PC-9 (cell line): ENCODE measurements at regions of chr6 and their contacts with region 1.

Region 1: GRCh38 chr6:144215932-144216667 is 65.8 kb downstream of the STX11 start:
- DNase-seq: peak; percentile 85 to 96
- H3K4me3 ChIP-seq: peak overlapping the region; percentile 85
- H3K27ac ChIP-seq: peak overlapping the region; percentile 70
- H3K4me1 ChIP-seq: peaks cover 15% of the 10 kb centered on the region; the same call in 1 of the 2 replicates
- H3K27me3 ChIP-seq: no peaks in the 10 kb centered on the region
- CTCF ChIP-seq: peak; percentile 83

Region 2: DNA sequence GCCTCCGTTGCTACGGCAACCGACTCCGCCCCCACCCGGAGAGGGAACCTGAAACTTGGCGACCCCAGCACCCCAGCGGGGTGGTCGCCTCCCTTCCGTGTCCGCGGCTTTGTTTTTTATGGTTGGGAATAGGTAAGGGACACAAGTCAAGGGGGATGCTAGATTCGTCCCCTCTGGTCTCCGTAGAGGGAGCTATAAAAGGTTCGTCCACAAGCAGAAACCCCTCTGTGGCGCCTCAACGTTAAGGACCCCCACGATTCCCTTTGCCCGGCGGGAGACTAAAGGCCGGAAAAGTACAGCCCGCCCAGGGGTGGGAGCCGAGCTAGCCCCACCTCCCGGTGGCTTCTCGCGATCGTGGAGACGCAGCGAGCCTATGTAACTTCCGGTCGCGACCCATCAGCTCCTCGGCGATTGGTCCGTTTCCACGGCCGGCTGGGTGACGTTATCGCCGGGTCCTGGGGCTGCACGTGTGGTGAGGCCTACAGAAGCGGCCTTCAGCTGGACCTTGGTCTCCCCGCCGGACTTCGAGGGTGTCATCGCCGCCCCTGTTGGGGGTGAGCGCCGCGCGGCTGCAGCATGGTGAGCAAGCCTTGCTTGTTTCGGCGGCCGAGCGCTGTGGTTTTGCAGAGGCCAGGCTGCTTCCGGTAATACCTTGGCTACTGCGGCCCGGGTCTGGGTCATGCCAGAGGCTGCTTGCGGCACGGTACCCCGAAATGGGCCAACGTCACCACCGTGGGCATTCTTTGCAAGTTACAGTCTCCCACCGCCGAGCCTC is 373.0 kb before region 1 on chr6 and contains the start of gene LTV1:
- CTCF ChIA-PET with region 1: no interaction called
- POLR2A ChIA-PET with region 1: no interaction called
- intact Hi-C with region 1: loop called (anchors 5 kb)
- DNase-seq: peak; percentile 87 to 92
- H3K4me3 ChIP-seq: peak within 1 kb of the TSS; percentile 94
- H3K27ac ChIP-seq: peak within 1 kb of the TSS; percentile 72
- H3K4me1 ChIP-seq: peaks cover 17% of the 10 kb centered on the region; the same call in 1 of the 2 replicates
- H3K27me3 ChIP-seq: no peaks in the 10 kb centered on the region
- CTCF ChIP-seq: no peak
- total RNA-seq, gene LTV1: 15.4 and 18.3 TPM in 2 replicates

Region 3: DNA sequence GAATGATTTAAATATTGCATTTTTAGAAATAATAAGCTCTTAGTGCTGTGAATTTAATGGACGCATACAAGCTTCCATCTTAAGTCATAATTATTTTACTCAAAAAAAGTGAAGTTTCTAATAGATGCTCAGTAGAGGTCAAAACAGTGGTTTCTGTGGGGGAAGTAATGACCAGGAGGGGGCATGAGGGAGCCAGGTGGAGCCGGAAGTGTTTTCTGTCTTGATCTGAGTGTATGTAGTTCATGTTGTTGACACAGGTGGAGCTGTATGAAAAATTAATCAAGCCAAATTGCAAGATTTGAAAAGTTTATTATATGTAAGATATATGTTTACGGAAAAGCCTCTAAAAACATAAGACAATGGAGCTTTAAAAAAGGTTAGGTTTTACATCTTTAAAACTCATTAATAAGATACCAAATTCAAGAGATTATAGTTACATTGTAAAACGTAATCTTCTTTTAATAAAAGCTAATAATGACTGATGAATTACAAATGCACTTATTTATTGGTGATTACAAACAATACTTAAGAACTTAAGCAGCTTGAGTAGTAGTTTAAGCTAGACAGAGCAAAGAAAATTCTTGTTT is 276.0 kb before region 1 on chr6:
- CTCF ChIA-PET with region 1: no interaction called
- POLR2A ChIA-PET with region 1: interaction called, 4 read pairs
- intact Hi-C with region 1: loop called (anchors 1 kb)
- DNase-seq: peak; percentile 37 to 39
- H3K4me3 ChIP-seq: no peak overlapping the region
- H3K27ac ChIP-seq: no peak overlapping the region
- H3K4me1 ChIP-seq: no peaks in the 10 kb centered on the region
- H3K27me3 ChIP-seq: no peaks in the 10 kb centered on the region
- CTCF ChIP-seq: peak; percentile 85

Region 4: GRCh38 chr6:144104898-144105487 is 111.1 kb before region 1 on chr6:
- CTCF ChIA-PET with region 1: interaction called, 3 read pairs
- POLR2A ChIA-PET with region 1: no interaction called
- intact Hi-C with region 1: loop called (anchors 1 kb)
- DNase-seq: peak; percentile 19 to 50
- H3K4me3 ChIP-seq: no peak overlapping the region
- H3K27ac ChIP-seq: no peak overlapping the region
- H3K4me1 ChIP-seq: no peaks in the 10 kb centered on the region
- H3K27me3 ChIP-seq: no peaks in the 10 kb centered on the region
- CTCF ChIP-seq: peak; percentile 84

Region 5: DNA sequence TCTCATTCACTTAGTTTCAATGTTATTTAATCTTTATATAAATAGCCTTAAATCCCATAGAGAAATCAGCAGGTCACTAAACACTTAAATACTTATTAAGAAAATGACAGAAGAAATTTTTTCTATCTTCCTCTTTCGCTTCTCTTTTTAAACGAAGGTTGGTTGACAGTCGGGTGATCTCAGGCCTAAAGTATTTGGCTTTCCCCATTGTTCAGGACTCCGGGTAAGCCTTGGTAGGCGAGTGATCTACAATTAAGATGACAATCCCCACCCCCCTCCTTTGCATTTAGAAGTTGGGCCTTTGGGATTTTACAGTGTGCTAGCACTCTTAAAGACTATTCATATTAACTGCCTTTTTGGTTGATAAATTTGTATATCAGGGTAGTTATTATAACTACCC is 49.3 kb after region 1 on chr6:
- CTCF ChIA-PET with region 1: no interaction called
- POLR2A ChIA-PET with region 1: interaction called, 10 read pairs
- intact Hi-C with region 1: loop called (anchors 5 kb)
- DNase-seq: peak; percentile 44 to 58
- H3K4me3 ChIP-seq: no peak overlapping the region
- H3K27ac ChIP-seq: peak overlapping the region; percentile 91
- H3K4me1 ChIP-seq: peaks cover 33% of the 10 kb centered on the region
- H3K27me3 ChIP-seq: no peaks in the 10 kb centered on the region
- CTCF ChIP-seq: no peak

Region 6: GRCh38 chr6:144330017-144330985 is 114.2 kb after region 1 on chr6:
- CTCF ChIA-PET with region 1: no interaction called
- POLR2A ChIA-PET with region 1: no interaction called
- intact Hi-C with region 1: loop called (anchors 2 kb)
- DNase-seq: peak; percentile 91 to 97
- H3K4me3 ChIP-seq: peak overlapping the region; percentile 68
- H3K27ac ChIP-seq: peak overlapping the region; percentile 78
- H3K4me1 ChIP-seq: peaks cover 35% of the 10 kb centered on the region
- H3K27me3 ChIP-seq: no peaks in the 10 kb centered on the region
- CTCF ChIP-seq: no peak

Region 7: DNA sequence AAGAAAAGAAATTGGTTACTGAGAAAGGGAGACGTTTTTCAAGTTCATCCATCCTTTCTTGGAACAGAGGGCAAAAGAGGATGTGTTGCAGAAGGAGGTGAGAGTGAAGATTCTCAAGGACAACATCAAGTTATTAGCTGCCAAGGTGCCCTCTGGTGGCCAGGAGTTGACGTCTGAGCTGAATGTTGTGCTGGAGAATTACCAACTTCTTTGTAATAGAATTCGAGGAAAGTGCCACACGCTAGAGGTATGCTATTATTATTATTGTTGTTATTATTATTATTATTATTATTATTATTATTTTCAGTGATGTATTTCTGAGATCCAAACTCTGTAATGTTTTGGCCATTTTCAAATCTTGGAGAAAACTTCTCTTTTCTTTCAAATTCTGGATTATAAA is 266.0 kb after region 1 on chr6:
- CTCF ChIA-PET with region 1: no interaction called
- POLR2A ChIA-PET with region 1: interaction called, 7 read pairs
- intact Hi-C with region 1: loop called (anchors 1 kb)
- DNase-seq: peak; percentile 60 to 69
- H3K4me3 ChIP-seq: no peak overlapping the region
- H3K27ac ChIP-seq: no peak overlapping the region
- H3K4me1 ChIP-seq: no peaks in the 10 kb centered on the region
- H3K27me3 ChIP-seq: no peaks in the 10 kb centered on the region
- CTCF ChIP-seq: peak; percentile 75